OCI-LY7 (cell line): ENCODE measurements at regions of chr11 and their contacts with region 1.

Region 1: DNA sequence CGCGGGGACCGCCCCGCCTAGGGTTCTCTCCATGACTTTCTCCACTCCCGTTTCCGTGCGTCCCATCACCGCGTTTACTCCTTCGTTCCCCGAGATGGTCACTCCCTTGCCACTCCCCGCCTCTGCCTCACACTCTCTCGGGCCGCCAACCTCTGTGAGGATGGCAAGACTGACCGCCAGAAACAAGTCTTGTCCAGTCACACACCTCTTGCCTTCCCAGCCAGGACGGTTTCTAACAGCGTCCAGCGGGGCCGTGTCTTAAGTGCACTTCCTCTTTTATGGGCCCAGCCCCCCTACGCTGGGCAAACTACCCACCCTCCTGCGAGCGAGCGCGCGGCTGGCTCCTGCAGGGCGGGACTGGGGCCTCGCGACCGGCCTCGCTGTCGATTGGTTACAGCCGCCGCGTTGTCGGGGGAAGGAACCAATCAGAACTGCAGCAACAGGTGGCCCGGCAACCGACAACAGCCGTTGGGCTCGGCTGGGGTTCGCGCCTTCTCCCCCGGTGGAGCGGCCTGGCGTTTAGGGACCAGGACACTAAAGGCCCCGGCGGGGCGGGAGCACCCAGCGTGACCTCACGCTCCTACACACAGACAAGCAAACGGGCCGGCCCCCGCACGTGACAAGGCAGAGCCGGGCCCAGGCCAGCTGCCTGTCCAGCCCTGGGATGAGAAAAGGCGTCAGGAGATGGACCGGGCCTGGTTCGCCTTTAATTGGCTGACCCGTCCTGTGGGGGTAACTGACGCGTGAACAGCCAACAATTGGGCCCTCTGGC is 512 bp upstream of the UCP2 start:
- DNase-seq: peak; percentile 98
- H3K4me3 ChIP-seq: peak overlapping the region; percentile 91
- H3K27ac ChIP-seq: peak overlapping the region; percentile 91
- H3K4me1 ChIP-seq: peaks cover 65% of the 10 kb centered on the region
- CTCF ChIP-seq: no peak

Region 2: DNA sequence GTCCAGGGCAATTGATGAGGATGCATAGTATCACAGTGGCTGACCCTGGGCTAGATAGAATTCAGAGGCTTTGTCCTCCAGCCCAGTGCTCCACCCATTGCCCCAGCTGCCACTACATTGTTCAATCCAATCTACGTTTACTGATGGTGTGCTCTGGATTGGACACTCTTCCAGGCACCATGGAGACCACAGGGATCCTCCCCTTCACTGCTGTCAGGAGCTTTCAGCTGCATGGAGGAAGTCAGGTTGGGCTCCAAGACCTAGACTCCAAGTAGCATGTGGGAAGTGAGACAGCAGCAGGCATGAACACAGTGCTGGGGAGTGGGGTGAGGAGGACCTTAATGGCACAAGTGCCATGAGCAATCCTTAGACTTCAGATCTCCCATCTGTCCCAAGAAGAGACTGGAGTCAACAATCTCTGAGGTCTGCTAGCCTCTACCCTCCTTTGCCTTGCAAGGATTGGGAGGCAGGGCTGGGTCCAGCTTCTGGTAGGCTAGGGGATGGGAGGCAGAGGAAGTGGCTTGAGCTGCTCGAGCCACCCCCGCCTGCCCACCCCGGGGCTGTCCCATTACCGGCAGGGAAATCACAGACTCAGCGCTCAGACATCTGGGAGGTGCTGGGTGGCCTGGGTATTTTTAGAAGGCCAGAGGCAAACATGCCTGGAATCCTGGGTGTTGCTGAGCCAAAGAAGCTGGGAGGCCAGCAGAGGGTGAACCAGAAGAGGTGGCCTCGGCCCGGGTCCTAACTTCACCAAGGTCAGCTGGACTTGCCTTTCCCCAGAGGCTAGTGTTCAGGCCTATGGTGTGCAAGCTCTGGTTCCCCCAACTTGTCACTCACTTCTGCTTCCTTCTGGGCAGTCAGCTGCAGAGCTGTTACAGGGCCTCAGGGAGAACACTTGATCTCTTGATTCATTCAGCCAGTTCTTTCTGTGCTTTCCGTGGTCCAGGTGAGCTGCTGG is 825.8 kb before region 1 on chr11:
- CTCF ChIA-PET with region 1: no interaction called
- POLR2A ChIA-PET with region 1: no interaction called
- intact Hi-C with region 1: loop called (anchors 10 kb)
- DNase-seq: peak; percentile 77
- H3K4me3 ChIP-seq: peak overlapping the region; percentile 41
- H3K27ac ChIP-seq: peak overlapping the region; percentile 98
- H3K4me1 ChIP-seq: peaks cover 85% of the 10 kb centered on the region
- CTCF ChIP-seq: no peak

Region 3: GRCh38 chr11:73787643-73788537 is 195.3 kb before region 1 on chr11 and contains the start of gene MRPL48:
- CTCF ChIA-PET with region 1: no interaction called
- POLR2A ChIA-PET with region 1: no interaction called
- intact Hi-C with region 1: loop called (anchors 10 kb)
- DNase-seq: peak; percentile 92
- H3K4me3 ChIP-seq: peak within 1 kb of the TSS; percentile 77
- H3K27ac ChIP-seq: peak within 1 kb of the TSS; percentile 92
- H3K4me1 ChIP-seq: peaks cover 49% of the 10 kb centered on the region
- CTCF ChIP-seq: no peak
- total RNA-seq, gene MRPL48: 167 and 180 TPM in 2 replicates

Region 4: DNA sequence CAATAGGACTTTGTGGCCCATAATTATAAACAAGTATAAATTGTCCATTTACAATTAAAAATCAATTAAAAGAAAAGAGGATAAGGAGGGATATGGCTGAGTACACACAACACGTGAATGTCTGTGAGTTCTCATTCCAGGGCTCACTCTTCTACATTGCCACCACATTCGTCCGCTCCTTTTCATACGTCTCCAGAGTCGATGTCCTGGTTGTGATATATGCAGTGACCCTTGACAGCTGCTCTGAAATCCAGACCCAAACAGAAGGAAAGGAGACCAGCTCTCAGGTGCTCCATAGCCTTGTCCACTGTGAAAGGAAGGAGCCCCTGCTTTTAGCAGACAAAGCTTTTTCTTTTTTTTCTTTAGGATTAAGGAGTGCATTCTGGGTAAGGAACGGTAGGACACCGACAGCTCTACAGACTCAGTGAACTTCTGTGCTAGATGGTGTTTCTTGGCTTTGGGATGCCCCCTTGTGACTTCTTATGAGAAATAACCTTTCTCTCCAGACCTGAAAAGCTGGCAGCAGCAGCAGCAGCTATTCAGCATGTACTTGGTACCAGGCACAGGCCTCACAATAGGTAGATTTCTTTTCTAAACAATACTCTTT is 52.0 kb before region 1 on chr11:
- CTCF ChIA-PET with region 1: no interaction called
- POLR2A ChIA-PET with region 1: no interaction called
- intact Hi-C with region 1: no loop called
- DNase-seq: peak; percentile 74
- H3K4me3 ChIP-seq: no peak overlapping the region
- H3K27ac ChIP-seq: no peak overlapping the region
- H3K4me1 ChIP-seq: no peaks in the 10 kb centered on the region
- CTCF ChIP-seq: peak; percentile 80

Region 5: GRCh38 chr11:73995247-73995646 is 12.1 kb after region 1 on chr11:
- CTCF ChIA-PET with region 1: interaction called, 7 read pairs
- POLR2A ChIA-PET with region 1: interaction called, 46 read pairs
- intact Hi-C with region 1: loop called (anchors 1 kb)
- DNase-seq: peak; percentile 81
- H3K4me3 ChIP-seq: peak overlapping the region; percentile 42
- H3K27ac ChIP-seq: peak overlapping the region; percentile 88
- H3K4me1 ChIP-seq: peaks cover 96% of the 10 kb centered on the region
- CTCF ChIP-seq: no peak

Region 6: DNA sequence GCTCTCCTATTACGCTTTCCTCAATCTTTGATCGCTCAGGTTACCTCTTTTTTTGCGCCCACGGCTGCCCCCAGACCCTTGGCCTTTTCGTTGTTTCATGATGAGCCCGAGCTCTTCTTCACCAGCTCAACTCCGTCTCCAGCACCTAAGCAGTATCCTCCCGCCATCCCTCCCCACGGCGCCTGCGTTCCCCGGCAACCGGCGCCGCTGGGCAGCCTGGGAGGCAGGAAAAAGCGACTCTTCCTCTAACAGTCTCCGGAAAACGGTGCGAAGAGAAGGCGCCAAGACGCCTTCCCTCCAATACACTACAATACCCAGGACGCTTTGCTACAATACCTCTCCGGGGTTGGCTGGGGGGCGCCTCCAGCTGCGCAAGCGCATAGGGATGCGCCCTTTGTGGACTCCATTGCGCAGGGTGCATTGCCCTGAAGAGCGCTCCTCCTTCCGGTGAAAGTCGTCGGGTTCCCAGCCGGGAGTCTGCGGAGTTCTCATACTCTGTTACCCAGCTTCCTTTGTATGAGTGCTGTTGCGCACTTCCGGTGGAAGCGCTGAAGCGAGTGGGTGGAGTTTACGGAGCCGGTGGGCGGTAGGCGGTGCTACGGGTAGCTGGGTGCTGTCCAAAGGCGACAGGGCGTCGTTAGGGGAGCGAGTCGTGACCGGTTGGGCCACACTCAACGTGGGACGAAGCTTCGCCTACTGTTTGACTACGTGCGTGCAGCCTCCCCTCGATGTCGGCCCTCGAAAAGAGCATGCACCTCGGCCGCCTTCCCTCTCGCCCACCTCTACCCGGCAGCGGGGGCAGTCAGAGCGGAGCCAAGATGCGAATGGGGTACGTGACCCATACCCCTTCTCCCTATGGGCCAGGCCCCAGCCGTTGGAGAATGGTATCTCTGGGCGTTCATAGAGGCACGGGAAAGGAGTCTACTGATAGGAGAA is 187.8 kb after region 1 on chr11 and contains the starts of genes C2CD3 and PPME1:
- CTCF ChIA-PET with region 1: interaction called, 5 read pairs
- POLR2A ChIA-PET with region 1: interaction called, 17 read pairs
- intact Hi-C with region 1: loop called (anchors 2 kb)
- DNase-seq: peak; percentile 100
- H3K4me3 ChIP-seq: peak within 1 kb of the TSS; percentile 93
- H3K27ac ChIP-seq: peak within 1 kb of the TSS; percentile 75
- H3K4me1 ChIP-seq: peaks cover 30% of the 10 kb centered on the region
- CTCF ChIP-seq: 0 out of 2 replicates have a peak, but pooled peaks have one; percentile 33
- total RNA-seq, gene C2CD3: 24.9 and 29.2 TPM in 2 replicates
- total RNA-seq, gene PPME1: 17.3 and 28.8 TPM in 2 replicates

Region 7: DNA sequence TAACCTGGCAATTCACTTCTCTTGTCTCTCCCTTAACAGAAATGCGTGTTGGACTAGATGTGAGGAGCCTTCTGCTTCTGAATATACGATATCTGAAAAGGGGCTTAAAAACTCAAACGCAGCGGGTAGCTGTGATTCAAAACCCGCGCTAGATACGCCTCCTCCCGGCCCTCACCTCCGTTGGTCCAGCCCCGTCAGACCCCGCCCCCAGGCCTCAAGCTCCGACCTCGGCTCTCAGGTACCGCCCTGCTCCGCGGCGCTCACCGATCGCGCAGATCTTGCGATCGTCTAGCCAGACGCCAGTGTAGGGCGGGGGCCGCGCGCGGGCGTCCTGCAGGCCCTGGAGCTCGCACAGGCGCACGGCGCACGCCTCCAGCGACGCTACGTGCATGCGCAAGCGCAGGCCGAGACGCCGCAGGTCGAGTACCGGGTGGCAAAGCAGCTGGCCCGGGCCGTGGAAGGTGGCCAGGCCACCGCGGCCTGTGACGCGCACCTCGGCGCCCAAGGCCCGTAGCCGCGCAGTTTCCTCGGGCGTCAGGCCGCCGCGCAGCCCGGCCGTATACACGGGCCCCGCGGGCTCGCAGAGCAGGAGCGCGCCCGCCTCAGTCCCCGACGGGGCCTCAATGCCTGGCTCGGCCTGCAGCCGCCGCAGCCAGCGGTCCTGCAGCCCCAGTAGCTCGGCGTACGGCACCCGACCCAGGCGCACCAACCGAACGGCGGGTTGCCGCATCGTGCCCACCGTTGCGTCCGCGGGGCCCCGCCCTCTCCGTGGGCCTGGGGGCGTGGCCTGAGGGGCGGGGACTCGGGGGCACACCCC is 510.0 kb after region 1 on chr11 and contains the start of gene LIPT2:
- CTCF ChIA-PET with region 1: no interaction called
- POLR2A ChIA-PET with region 1: interaction called, 4 read pairs
- intact Hi-C with region 1: loop called (anchors 5 kb)
- DNase-seq: peak; percentile 99
- H3K4me3 ChIP-seq: peak within 1 kb of the TSS; percentile 83
- H3K27ac ChIP-seq: peak within 1 kb of the TSS; percentile 90
- H3K4me1 ChIP-seq: peaks cover 17% of the 10 kb centered on the region
- CTCF ChIP-seq: no peak
- total RNA-seq, gene LIPT2: 11.8 and 14.3 TPM in 2 replicates